ENCODE measurements at regions of chr15 and their contacts with region 1.

Region 1: DNA sequence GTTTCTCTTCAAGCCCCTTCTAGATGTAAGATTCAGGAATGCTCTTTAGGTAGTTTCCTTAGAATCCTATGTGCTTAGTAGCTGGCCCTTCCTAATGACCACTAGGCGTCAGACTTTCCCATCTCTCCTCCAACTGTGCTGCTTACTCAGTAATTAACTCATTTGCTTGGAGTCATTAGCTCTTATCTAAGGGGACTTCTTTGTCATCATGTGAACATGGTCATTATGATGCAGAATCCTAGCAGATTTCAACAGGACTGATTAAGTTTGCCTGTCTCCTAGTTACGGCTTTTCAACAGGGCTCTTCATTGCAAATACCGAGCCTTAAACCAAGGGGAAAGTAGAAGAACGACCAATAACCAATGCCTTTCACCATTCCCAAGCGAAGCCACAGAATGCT is 46.4 kb downstream of the GJD2 start:
- DNase-seq: peak; percentile 12

Region 2: DNA sequence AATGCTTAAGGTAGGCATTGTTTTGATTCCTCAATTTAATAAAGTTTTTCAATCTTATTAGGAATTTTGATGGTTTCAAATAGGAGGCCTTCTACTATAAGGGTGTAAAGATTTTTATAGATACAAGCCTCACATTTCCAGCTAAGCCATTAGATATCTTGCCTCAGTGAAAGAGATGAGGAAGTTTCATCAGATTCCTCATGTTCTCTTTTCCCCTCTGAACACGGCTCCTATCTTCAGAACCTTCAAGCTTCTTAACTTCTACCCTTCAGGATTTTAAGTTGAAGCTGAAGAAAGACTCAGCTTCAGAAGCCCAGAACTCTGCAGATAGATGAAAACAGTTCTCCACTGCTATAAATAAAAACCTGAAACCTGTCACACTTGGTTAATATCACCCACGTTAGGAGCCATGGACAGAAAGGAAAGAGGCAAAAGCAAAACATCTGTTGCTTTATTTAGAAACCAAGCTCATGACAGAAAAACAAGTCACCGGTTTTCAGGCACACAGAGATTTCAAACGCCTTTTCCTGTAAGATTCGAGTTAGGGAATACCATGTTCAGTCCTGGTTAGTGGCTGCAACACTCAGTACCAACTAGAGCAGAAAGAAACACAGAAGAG is 42.8 kb before region 1 on chr15:
- CTCF ChIA-PET with region 1: no interaction called
- POLR2A ChIA-PET with region 1: no interaction called
- DNase-seq: no peak

Region 3: DNA sequence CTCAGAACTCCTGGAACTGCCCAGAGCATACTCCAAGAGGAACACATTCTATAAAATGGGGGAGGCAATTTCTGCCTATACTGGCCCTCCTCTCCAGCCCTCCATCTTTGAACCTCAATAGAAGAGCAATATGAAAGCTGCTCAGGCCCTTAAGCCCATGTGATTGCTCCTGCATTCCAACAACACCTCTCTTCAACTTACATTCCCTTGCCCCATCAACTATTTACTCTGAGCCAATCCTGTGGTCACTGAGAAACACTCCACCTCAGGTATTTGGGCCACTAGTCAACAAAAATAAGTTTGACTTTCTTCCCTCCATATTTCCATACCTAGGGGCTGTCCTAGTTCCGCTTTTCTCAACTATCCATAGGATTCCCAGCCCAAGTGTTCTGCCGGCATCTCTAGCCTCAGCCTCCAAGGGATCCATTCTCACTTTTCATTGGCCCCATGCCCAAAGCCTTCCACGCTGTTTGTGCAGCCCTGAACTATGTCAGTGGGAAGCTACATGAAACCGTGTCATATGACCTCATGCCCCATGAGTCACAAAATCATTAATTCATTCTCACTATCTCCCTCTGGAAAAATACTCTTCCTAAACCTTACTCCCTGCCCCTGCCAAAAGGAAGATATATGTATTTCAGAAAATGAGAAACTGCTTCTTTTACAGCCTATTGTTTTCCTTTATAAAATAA is 15.2 kb before region 1 on chr15:
- CTCF ChIA-PET with region 1: no interaction called
- POLR2A ChIA-PET with region 1: no interaction called
- DNase-seq: no peak

Region 4: GRCh38 chr15:34718681-34719641 is 10.5 kb after region 1 on chr15:
- CTCF ChIA-PET with region 1: interaction called, 10 read pairs
- POLR2A ChIA-PET with region 1: no interaction called
- DNase-seq: no peak

Region 5: GRCh38 chr15:35399901-35400300 is 691.5 kb after region 1 on chr15:
- CTCF ChIA-PET with region 1: no interaction called
- POLR2A ChIA-PET with region 1: no interaction called
- DNase-seq: no peak